ENCODE measurements at regions of chr17 and their contacts with region 1.

Region 1: GRCh38 chr17:43170766-43171585 is at the start of gene NBR1:
- DNase-seq: peak; percentile 88 to 99 (median 95)
- ATAC-seq: peak; percentile 79
- H3K4me3 ChIP-seq: peak within 1 kb of the TSS; percentile 84 to 85
- H3K4me3 Mint-ChIP-seq: no peak within 1 kb of the TSS
- H3K27ac ChIP-seq: peak within 1 kb of the TSS; percentile 97 to 98
- H3K27ac Mint-ChIP-seq: no peak within 1 kb of the TSS
- H3K4me1 ChIP-seq: peaks cover 35% of the 10 kb centered on the region
- H3K4me1 Mint-ChIP-seq: peaks cover 33% of the 10 kb centered on the region
- H3K27me3 ChIP-seq: no peaks in the 10 kb centered on the region
- H3K27me3 Mint-ChIP-seq: no peaks in the 10 kb centered on the region
- CTCF ChIP-seq: no peak
- total RNA-seq, gene NBR1: 19.1 to 19.4 TPM

Region 2: DNA sequence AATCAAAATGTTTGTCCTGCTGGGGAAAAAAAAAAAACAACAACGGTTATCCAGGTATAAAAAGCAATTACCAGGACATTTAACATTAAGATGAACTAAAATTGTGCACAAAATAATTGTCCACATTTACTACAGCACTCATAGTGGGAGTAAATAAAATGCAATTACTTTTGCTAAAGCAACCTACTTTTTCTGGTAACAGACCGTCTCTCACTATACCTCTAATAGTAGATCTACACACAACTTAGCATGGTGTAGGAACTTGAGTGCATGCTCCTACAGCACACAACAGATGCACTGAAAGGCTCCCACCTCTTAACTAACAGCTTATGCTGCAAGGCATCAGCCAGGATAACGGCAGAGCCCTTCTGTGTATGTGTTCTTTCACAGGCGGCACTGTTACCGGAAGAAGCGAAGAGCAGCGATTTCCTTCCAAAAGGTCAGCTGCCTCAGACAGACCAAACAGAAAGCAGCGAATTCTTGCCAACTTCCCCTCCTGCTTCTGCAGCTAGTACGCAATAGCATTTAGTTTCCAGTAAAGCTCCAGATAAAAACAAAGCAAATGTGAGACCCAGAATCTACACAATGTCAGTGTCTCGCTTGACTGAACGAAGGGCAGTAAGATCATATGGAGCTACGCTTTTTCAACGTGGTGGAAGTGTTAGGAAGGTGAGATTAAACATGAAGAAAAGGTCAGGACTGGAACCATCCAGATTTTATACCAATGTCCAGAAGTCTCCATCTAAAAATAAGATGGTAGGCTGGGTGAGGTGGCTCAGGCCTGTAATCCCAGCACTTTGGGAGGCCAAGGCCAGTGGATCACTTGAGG is 922.4 kb before region 1 on chr17:
- CTCF ChIA-PET with region 1: no interaction called
- POLR2A ChIA-PET with region 1: no interaction called
- intact Hi-C with region 1: loop called in 1 of 2 experiments (anchors 5 kb)
- DNase-seq: peak; percentile 60 to 96 (median 80)
- ATAC-seq: peak; percentile 85
- H3K4me3 ChIP-seq: peak overlapping the region; percentile 36 to 46
- H3K4me3 Mint-ChIP-seq: peak overlapping the region; percentile 81
- H3K27ac ChIP-seq: peak overlapping the region; percentile 87 to 90
- H3K27ac Mint-ChIP-seq: peak overlapping the region; percentile 98
- H3K4me1 ChIP-seq: peaks cover 55% of the 10 kb centered on the region
- H3K4me1 Mint-ChIP-seq: peaks cover 70% of the 10 kb centered on the region
- H3K27me3 ChIP-seq: no peaks in the 10 kb centered on the region
- H3K27me3 Mint-ChIP-seq: no peaks in the 10 kb centered on the region
- CTCF ChIP-seq: no peak

Region 3: DNA sequence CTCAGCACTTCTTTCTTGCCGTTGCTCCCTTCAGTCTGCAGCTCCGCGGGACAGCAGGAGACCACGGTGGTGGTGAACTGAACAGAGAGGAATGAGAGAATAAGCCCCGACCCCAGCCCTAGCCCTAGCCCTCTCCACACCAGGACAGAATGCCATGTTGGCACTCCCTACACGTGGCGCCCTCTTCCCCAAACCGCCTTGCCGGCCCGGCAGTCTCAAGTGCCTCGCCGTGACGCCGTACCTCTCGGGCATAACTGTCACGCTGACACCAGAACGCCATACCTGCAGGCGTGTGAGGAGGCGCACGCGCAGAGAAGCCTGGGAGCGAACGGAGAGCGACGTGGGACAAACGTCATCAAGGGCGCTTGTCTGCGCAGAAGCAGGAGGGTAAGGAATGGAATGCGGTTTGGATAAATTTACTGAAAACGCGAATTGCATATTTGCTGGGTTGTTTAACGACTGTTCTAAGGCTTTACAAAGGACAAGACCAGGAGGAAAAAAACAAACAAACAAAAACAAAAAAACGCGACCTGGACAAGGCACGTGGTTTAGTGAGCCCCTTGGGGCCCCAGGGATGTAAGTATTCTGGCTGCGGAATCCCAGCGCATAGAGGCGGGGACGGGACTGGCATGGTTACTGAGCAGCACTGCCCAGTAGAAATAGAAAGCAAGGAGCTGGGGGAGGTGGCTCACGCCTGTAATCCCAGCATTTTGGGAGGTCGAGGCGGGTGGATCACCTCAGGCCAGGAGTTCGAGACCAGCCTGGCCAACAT is 206.6 kb before region 1 on chr17 and contains the start of gene AARSD1:
- CTCF ChIA-PET with region 1: no interaction called
- POLR2A ChIA-PET with region 1: no interaction called
- intact Hi-C with region 1: loop called in 1 of 2 experiments (anchors 2 kb)
- DNase-seq: peak; percentile 80 to 96 (median 88)
- ATAC-seq: peak; percentile 99
- H3K4me3 ChIP-seq: peak within 1 kb of the TSS; percentile 48 to 86
- H3K4me3 Mint-ChIP-seq: peak within 1 kb of the TSS; percentile 87
- H3K27ac ChIP-seq: peak within 1 kb of the TSS; percentile 63 to 82
- H3K27ac Mint-ChIP-seq: peak within 1 kb of the TSS; percentile 84
- H3K4me1 ChIP-seq: peaks cover 7% of the 10 kb centered on the region
- H3K4me1 Mint-ChIP-seq: peaks cover 19% of the 10 kb centered on the region
- H3K27me3 ChIP-seq: no peaks in the 10 kb centered on the region
- H3K27me3 Mint-ChIP-seq: no peaks in the 10 kb centered on the region
- CTCF ChIP-seq: no peak
- total RNA-seq, gene AARSD1: 75.1 to 87.6 TPM

Region 4: GRCh38 chr17:43211480-43212402 is 40.8 kb after region 1 on chr17 and contains the start of gene TMEM106A:
- CTCF ChIA-PET with region 1: interaction called, 3 read pairs
- POLR2A ChIA-PET with region 1: interaction called, 26 read pairs
- intact Hi-C with region 1: loop called (anchors 1 kb)
- DNase-seq: peak; percentile 50 to 89 (median 76)
- ATAC-seq: peak; percentile 92
- H3K4me3 ChIP-seq: peak within 1 kb of the TSS; percentile 82 to 95
- H3K4me3 Mint-ChIP-seq: peak within 1 kb of the TSS; percentile 98
- H3K27ac ChIP-seq: peak within 1 kb of the TSS; percentile 75 to 82
- H3K27ac Mint-ChIP-seq: peak within 1 kb of the TSS; percentile 96
- H3K4me1 ChIP-seq: peaks cover 25% of the 10 kb centered on the region
- H3K4me1 Mint-ChIP-seq: peaks cover 40% of the 10 kb centered on the region
- H3K27me3 ChIP-seq: no peaks in the 10 kb centered on the region
- H3K27me3 Mint-ChIP-seq: no peaks in the 10 kb centered on the region
- CTCF ChIP-seq: peak; percentile 58
- total RNA-seq, gene TMEM106A: 8.9 to 9.2 TPM

Region 5: DNA sequence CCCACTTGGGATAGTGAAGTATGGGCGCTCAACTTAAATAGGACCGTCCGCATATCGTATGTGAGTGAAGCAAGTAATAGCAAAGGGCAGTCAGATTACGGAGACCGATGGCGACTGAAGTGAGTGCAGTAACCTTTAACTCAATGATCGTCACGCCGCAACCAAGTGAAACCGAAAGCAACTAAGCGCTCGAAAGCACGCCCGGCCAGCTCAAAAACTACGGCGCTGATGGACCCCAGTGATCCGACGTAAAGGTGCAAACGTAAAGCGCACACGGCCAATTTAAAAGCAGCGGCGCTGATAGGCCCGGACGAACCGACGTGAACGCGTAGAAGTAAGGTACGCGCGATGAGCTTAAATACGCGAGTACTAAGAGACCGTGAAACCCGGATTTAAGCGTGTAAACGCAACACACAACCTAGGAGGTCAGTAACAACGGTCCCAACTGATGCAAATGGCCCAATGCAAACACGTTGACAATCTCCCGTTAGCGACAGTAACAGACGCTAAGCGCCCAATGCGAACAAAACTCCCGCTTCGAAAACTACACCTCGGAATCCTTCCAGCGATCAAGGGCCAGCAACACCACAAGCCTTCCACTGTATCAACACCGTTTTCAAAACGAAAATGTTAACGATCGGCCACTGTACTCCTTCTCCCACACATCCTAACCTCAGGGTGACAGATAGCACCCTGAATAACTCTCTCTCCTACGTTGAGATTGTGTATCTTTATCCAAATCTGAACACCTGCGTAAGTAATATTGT is 189.9 kb after region 1 on chr17:
- CTCF ChIA-PET with region 1: no interaction called
- POLR2A ChIA-PET with region 1: interaction called, 39 read pairs
- intact Hi-C with region 1: loop called in 1 of 2 experiments (anchors 1 kb)
- DNase-seq: peak; percentile 80 to 98 (median 94)
- ATAC-seq: peak; percentile 76
- H3K4me3 ChIP-seq: peak overlapping the region; percentile 60 to 64
- H3K4me3 Mint-ChIP-seq: peak overlapping the region; percentile 86
- H3K27ac ChIP-seq: peak overlapping the region; percentile 92 to 100
- H3K27ac Mint-ChIP-seq: peak overlapping the region; percentile 100
- H3K4me1 ChIP-seq: peaks cover 13% of the 10 kb centered on the region
- H3K4me1 Mint-ChIP-seq: peaks cover 35% of the 10 kb centered on the region
- H3K27me3 ChIP-seq: no peaks in the 10 kb centered on the region
- H3K27me3 Mint-ChIP-seq: no peaks in the 10 kb centered on the region
- CTCF ChIP-seq: no peak

Region 6: DNA sequence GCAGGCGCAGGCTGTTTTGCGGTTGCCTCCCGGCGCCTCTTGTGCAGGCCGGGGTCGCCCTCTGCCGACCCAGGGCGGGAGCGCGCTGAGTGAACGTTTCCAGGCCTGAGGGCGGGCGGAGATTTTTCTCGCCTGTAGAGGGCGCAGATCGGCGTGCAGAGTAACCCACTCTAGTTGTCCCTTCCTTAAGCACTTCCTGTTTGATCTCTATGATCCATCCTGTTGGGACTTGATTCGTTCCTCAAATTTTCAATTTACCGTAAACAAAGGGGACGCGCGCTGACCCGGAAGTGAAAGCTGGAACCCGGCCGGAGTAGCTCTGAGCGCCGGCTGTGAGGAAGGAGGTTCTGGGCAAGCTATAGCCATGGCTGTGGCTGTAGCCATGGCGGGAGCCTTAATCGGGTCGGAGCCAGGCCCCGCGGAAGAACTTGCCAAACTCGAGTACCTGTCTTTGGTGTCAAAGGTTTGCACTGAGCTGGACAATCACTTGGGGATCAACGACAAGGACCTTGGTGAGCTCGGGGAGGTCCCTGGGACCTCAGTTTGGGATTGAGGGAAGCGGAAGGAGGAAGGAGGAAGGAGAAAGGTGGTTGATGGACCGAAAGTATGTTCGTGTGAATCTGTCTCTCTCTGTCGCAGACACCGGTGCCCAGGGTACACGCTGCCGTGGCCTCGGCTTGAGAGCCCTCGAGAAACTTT is 312.8 kb after region 1 on chr17 and contains the start of gene DHX8:
- CTCF ChIA-PET with region 1: interaction called, 3 read pairs
- POLR2A ChIA-PET with region 1: interaction called, 3 read pairs
- intact Hi-C with region 1: loop called (anchors 1 kb)
- DNase-seq: peak; percentile 97 to 100 (median 99)
- ATAC-seq: peak; percentile 98
- H3K4me3 ChIP-seq: peak within 1 kb of the TSS; percentile 94 to 99
- H3K4me3 Mint-ChIP-seq: peak within 1 kb of the TSS; percentile 100
- H3K27ac ChIP-seq: peak within 1 kb of the TSS; percentile 87 to 91
- H3K27ac Mint-ChIP-seq: peak within 1 kb of the TSS; percentile 99
- H3K4me1 ChIP-seq: peaks cover 27% of the 10 kb centered on the region
- H3K4me1 Mint-ChIP-seq: peaks cover 37% of the 10 kb centered on the region
- H3K27me3 ChIP-seq: no peaks in the 10 kb centered on the region
- H3K27me3 Mint-ChIP-seq: no peaks in the 10 kb centered on the region
- CTCF ChIP-seq: peak; percentile 100
- total RNA-seq, gene DHX8: 125 to 130 TPM

Region 7: GRCh38 chr17:43734376-43734775 is 563.4 kb after region 1 on chr17:
- CTCF ChIA-PET with region 1: no interaction called
- POLR2A ChIA-PET with region 1: no interaction called
- intact Hi-C with region 1: no loop called
- DNase-seq: no peak
- ATAC-seq: no peak
- H3K4me3 ChIP-seq: no peak overlapping the region
- H3K4me3 Mint-ChIP-seq: no peak overlapping the region
- H3K27ac ChIP-seq: no peak overlapping the region
- H3K27ac Mint-ChIP-seq: no peak overlapping the region
- H3K4me1 ChIP-seq: no peaks in the 10 kb centered on the region
- H3K4me1 Mint-ChIP-seq: no peaks in the 10 kb centered on the region
- H3K27me3 ChIP-seq: no peaks in the 10 kb centered on the region
- H3K27me3 Mint-ChIP-seq: peaks cover 9% of the 10 kb centered on the region
- CTCF ChIP-seq: no peak